RWPE1 (cell line): ENCODE measurements at regions of chr10 and their contacts with region 1.

Region 1: GRCh38 chr10:34885898-34886297 is 70.8 kb upstream of the PARD3 start:
- DNase-seq: no peak
- H3K27ac ChIP-seq: no peak overlapping the region
- CTCF ChIP-seq: no peak

Region 2: GRCh38 chr10:34489973-34490745 is 395.7 kb before region 1 on chr10:
- CTCF ChIA-PET with region 1: no interaction called
- POLR2A ChIA-PET with region 1: no interaction called
- DNase-seq: peak; percentile 67
- H3K27ac ChIP-seq: no peak overlapping the region
- CTCF ChIP-seq: 0 out of 2 replicates have a peak, but pooled peaks have one; percentile 15

Region 3: GRCh38 chr10:34864149-34865067 is 21.5 kb before region 1 on chr10:
- CTCF ChIA-PET with region 1: no interaction called
- POLR2A ChIA-PET with region 1: interaction called, 15 read pairs
- DNase-seq: no peak
- H3K27ac ChIP-seq: no peak overlapping the region
- CTCF ChIP-seq: no peak

Region 4: DNA sequence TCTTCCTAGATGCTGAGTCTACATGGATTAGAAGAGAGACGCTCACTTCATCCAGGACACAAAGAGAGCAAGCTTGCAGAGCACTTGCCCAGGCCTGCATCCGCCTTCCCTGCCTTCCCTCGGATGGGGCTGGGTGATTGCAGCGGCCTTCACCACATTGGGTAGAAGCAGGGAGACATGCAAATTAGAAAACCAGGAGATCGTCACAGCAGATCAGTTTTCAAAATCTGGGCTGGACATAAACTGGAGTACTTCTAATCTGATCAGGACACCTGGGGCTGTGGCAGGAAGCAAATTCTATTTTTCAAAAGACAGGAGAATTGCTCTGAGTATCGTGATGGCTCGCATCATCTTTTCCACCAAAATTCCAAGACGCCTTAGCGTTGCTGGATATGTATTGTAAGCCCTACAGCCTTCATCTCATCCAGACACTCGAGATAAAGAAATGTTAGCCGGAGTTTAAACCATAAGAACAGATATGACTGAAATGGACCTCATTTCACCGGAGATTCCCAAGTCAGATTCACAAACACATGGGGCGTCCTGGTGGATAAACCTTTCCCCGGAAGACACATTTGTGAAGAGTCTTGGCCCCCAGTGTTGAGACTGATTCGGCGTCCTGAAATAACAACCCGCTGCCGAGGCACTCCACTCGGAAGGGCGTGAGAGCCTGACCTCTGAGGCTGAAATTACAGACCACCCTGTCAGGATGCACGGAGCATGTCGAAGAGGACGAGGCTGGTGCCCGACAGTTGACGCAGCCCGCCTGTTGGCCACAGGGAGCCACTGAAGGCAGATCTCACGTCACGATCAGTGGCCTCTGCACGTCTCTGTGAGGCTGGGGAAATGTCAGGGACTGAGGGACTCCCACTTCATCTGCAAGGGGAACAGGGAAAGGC is 20.4 kb after region 1 on chr10:
- CTCF ChIA-PET with region 1: no interaction called
- POLR2A ChIA-PET with region 1: no interaction called
- DNase-seq: peak; percentile 77
- H3K27ac ChIP-seq: peak overlapping the region; percentile 69
- CTCF ChIP-seq: no peak